SK-N-SH (cell line): ENCODE measurements at regions of chr9 and their contacts with region 1.

Region 1: GRCh38 chr9:22469928-22470544 is 23.4 kb downstream of the DMRTA1 start:
- DNase-seq: peak; percentile 11
- H3K4me3 ChIP-seq: no peak overlapping the region; a peak in 1 of 4 replicates
- H3K27ac ChIP-seq: no peak overlapping the region
- H3K4me1 ChIP-seq: no peaks in the 10 kb centered on the region
- H3K27me3 ChIP-seq: peaks cover 13% of the 10 kb centered on the region; the same call in 1 of the 2 replicates
- CTCF ChIP-seq: peak; percentile 83
- EP300 ChIP-seq: no peak
- RAD21 ChIP-seq: peak; percentile 70

Region 2: DNA sequence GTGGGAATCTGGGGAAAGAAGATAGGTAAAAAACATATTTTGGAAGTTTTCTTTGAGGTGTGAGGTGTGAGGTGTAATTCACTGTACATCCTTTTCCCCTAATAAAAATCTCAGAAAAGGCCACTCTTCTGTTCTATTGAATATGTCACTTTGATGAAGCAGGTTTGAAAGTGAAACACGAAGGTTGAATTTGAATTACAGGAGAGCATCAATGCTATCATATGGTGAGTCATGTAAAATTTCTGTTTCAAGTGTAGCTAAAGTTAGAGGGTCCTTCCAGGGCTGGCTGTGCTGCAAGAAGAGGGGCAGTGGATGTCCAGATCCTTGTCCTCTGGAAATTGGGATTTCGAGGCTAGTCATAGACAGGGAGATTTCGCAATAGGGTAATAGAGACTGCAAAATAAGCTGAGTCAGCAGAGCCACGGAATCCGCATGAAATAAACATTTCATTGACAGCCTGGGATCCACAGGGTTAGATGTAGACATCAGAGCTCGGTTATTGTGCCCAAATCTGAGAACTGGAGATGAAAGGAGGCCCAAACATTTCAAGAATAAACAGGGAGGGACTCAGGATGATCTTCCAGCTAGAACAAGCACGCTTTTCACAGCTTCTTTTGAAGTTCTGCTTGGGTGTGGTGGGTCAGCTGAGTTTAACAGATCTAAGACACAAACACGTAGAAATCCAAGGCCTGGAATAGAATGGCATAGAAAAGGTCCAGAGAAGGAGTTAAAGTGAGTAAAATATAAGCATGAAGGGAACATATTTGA is 266.5 kb before region 1 on chr9:
- CTCF ChIA-PET with region 1: no interaction called
- POLR2A ChIA-PET with region 1: no interaction called
- DNase-seq: no peak
- H3K4me3 ChIP-seq: no peak overlapping the region; a peak in 1 of 4 replicates
- H3K27ac ChIP-seq: no peak overlapping the region
- H3K4me1 ChIP-seq: peaks cover 0 to under 1% of the 10 kb centered on the region in 2 experiments; a peak in 1 of 4 replicates
- H3K27me3 ChIP-seq: peaks cover 5% of the 10 kb centered on the region; the same call in 1 of the 2 replicates
- CTCF ChIP-seq: no peak
- EP300 ChIP-seq: no peak
- RAD21 ChIP-seq: no peak

Region 3: DNA sequence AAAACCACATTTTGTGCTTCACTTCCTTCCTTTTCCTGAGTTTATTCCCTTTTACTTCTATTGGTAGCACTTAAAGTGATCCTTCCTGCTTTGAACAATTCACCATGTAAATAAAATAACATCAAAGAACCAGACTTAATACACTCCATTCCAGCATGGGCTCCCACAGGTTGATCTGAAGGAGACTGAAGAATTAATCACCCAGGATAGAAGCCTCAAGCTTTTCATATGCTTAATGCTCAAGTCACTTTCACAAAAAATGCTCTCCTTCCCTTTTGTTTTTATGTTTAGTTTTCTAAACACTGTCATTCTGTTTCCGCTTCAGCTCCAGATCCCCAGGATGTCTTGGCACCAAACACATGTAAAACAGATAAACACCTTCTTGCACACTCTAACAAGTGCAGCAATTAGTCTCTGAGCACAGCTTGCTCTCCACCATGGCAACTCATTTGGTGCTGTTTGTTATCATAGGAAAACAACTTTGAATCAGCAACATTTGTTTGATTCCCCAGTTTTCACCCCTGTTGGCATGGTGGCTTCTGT is 13.6 kb after region 1 on chr9:
- CTCF ChIA-PET with region 1: interaction called, 16 read pairs
- POLR2A ChIA-PET with region 1: no interaction called
- DNase-seq: no peak
- H3K4me3 ChIP-seq: no peak overlapping the region
- H3K27ac ChIP-seq: no peak overlapping the region
- H3K4me1 ChIP-seq: no peaks in the 10 kb centered on the region
- H3K27me3 ChIP-seq: no peaks in the 10 kb centered on the region
- CTCF ChIP-seq: no peak
- EP300 ChIP-seq: no peak
- RAD21 ChIP-seq: no peak